OCI-LY7 (cell line): ENCODE measurements at regions of chr14 and their contacts with region 1.

Region 1: DNA sequence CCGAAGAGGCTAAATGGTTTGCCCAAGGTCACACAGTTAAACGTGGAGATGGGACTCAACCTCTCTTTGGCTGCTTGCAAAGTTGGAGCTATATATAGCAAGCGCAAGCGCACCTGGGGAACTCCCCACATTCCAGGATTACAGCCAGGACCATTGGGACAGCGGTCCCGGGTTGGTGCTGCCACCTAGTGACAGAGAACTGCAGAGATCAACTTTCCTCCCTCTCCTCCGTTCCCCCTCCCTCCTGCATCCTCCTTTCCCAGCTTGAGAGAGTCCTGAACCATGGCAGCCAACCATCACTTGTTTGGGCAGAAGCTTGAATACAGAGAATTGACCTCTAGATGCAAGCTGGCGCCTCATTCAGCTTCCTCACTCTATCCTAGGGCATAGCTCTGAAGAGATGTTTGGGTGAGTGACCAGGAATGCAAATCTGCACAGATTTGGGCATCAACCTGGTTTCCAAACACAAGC is 17.4 kb upstream of the FLVCR2 start:
- DNase-seq: peak; percentile 53
- H3K4me3 ChIP-seq: no peak overlapping the region
- H3K27ac ChIP-seq: no peak overlapping the region
- H3K4me1 ChIP-seq: no peaks in the 10 kb centered on the region
- CTCF ChIP-seq: peak; percentile 97

Region 2: DNA sequence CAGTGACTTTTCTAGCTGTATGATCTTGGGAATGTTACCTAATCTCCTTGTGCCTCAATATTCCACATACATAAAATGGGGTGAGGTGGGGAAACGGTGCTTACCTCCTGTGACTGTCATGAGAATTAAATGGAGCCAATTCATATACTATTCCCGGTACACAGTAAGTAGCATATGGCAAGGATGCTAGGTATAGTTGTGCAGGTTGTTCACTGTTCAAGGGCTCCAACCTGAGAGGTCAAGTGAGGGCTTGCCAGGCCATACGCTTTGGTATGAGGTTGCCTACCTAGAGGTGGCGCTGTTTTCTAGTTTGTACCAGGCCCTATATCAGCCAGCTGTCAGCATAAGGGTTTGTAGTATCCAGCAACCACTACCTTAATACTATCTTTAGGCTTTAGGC is 42.4 kb before region 1 on chr14:
- CTCF ChIA-PET with region 1: interaction called, 3 read pairs
- POLR2A ChIA-PET with region 1: no interaction called
- intact Hi-C with region 1: loop called (anchors 2 kb)
- DNase-seq: peak; percentile 54
- H3K4me3 ChIP-seq: no peak overlapping the region
- H3K27ac ChIP-seq: no peak overlapping the region
- H3K4me1 ChIP-seq: peaks cover 36% of the 10 kb centered on the region
- CTCF ChIP-seq: peak; percentile 77